Pancreas (tissue), 10 donors: ENCODE measurements at regions of chr10 and their contacts with region 1.

Region 1: DNA sequence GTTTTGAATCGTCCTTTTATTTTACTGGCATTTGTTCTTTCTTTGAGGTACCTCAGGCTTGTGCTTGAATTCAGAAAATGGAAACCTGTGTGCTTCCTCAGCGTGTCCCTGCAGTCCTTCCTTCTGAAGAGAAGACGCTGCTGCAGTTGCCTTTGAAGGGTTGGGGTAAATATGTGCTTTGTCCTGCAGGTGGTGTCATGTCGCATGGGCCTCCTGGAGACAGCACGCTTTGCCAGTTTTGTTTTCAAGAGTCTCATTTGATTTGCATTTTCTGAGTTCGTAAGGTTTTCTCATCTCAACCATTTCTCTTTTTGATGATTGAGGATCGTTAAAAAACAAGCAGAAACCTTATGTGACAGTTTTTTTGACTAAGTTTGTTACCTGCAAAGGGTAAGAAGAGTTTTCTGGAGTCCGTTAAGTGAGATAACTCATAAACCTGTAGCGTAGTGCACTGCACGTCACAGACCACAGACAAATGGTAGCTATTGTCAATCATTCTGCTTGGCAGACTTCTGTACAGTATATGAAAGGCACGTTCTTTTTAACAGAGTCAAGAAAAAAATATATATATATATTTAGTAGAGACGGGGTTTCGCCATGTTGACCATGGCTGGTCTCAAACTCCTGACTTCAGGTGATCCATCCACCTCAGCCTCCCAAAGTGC is 57.0 kb downstream of the CDC123 start:
- DNase-seq: peak in 1 of 6 donors; percentile 13
- ATAC-seq: no peak
- H3K4me3 ChIP-seq: no peak overlapping the region
- H3K27ac ChIP-seq: no peak overlapping the region
- H3K4me1 ChIP-seq: no peaks in the 10 kb centered on the region
- H3K27me3 ChIP-seq: no peaks in the 10 kb centered on the region
- CTCF ChIP-seq: no peak

Region 2: GRCh38 chr10:12710594-12711349 is 457.8 kb after region 1 on chr10:
- intact Hi-C with region 1: loop called in 1 of 3 experiments (anchors 10 kb)
- DNase-seq: peak; percentile 54 to 88 (median 78)
- ATAC-seq: peak; percentile 85 to 91 (median 88)
- H3K4me3 ChIP-seq: no peak overlapping the region
- H3K27ac ChIP-seq: no peak overlapping the region
- H3K4me1 ChIP-seq: peaks cover 0 to 38% (median 14%) of the 10 kb centered on the region in 3 donors
- H3K27me3 ChIP-seq: no peaks in the 10 kb centered on the region
- CTCF ChIP-seq: peak; percentile 70 to 86 (median 74)